ENCODE measurements at regions of chr3 and their contacts with region 1.

Region 1: DNA sequence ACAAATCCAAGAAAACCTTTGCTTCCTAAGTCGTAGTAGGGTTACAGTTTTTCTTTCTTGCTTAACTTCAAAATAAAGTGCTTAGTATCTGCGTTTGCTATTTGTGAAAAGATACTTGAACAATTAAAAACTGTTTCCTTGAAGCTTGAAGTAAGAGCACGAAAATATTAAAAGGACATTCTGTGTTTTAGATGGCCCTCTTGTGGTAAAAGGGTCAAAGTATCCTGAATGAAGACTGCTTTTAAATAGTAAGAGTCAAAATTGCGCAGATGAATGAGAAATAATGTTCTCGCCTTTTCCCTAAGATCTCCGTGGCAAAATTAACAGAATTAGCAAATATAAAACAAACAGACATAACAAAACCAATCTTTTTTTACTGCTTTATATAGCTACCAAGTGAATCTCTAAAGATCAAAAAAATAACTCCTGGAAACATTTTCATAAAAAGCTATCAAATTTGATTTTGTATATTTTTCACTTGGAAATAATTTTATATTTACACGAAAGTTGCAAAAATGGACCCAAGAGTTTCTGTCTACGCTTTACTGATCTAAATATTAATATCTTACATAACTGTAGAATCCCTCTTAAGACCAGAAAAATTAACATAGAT is 175.4 kb downstream of the MBNL1 start:
- DNase-seq: no peak
- H3K4me3 ChIP-seq: no peak overlapping the region
- H3K27ac ChIP-seq: peak overlapping the region; percentile 23
- H3K4me1 ChIP-seq: peaks cover 55% of the 10 kb centered on the region
- H3K27me3 ChIP-seq: no peaks in the 10 kb centered on the region
- CTCF ChIP-seq: peak; percentile 34 to 80 (median 43)
- POLR2A ChIP-seq: no peak

Region 2: DNA sequence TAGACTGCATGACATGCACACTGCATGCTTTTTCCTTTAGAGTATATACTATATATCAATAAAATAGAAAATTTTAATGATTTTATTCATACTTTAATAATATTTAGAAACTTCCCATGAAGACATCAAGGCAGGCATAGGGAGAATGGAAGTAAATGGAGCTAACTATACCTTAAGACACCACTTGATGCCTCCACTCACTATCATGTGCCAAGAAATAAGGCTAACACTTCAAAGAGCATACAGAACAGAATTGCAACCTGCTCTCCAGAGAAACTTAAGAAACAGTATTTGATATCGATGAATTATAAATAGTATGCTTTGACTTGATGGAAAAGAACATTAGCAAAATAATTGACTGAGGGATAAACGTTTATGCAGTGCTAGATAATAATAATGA is 368.0 kb before region 1 on chr3:
- intact Hi-C with region 1: no loop called
- DNase-seq: no peak
- H3K4me3 ChIP-seq: no peak overlapping the region
- H3K27ac ChIP-seq: no peak overlapping the region
- H3K4me1 ChIP-seq: no peaks in the 10 kb centered on the region
- H3K27me3 ChIP-seq: no peaks in the 10 kb centered on the region
- CTCF ChIP-seq: no peak
- POLR2A ChIP-seq: no peak

Region 3: DNA sequence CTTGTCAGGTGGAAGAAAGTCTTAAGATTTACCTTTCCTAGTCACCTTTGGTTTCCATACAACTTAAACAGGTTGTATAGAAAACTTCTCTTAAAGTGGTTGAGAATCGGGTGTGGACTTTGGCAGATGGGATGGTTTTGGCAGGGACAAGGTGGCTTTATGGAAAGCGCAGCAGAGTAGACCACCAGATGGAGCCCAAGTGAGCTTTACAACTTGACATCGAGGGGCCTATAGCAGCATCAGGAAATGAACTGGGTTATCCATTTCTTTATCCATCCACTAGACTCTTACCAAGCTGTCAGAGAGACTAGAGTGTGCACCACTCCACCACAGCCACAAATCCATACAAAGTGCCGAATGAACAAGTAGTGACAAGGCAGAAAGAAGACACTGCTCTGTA is 260.7 kb before region 1 on chr3:
- intact Hi-C with region 1: loop called (anchors 10 kb)
- DNase-seq: no peak
- H3K4me3 ChIP-seq: no peak overlapping the region
- H3K27ac ChIP-seq: no peak overlapping the region
- H3K4me1 ChIP-seq: no peaks in the 10 kb centered on the region
- H3K27me3 ChIP-seq: no peaks in the 10 kb centered on the region
- CTCF ChIP-seq: peak in 1 of 3 experiments; percentile 24
- POLR2A ChIP-seq: no peak

Measured in vagina (tissue), 2 donors.